Lower leg skin (tissue), 4 donors: ENCODE measurements at regions of chr10 and their contacts with region 1.

Region 1: DNA sequence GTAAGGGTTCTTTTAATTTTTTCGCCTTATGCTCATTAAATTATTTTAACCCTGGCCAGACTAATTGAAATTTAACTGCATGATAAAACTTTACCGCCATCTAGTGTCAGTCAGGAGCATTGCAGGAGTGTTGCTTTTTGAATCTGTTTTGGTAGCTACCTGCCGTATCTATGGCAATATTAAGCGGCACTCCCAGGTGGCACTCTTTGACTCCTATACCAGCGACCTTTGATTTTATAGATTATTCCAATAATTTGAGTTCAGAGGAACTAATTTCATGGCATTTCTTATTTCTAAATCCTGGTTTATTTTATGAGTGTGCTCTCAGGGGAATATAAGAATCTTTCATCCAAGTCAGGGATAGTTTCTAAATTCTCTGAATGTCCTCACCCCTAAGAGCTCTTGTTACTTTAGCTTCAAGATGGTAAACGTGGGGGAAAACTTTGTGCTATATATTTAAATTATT is 198.9 kb downstream of the REEP3 start:
- DNase-seq: no peak
- H3K4me3 ChIP-seq: no peak overlapping the region
- CTCF ChIP-seq: peak in 2 of 3 donors; percentile 24 to 77
- POLR2A ChIP-seq: no peak

Region 2: GRCh38 chr10:63166742-63167258 is 553.3 kb before region 1 on chr10:
- intact Hi-C with region 1: loop called (anchors 10 kb)
- DNase-seq: no peak
- H3K4me3 ChIP-seq: no peak overlapping the region
- CTCF ChIP-seq: peak in 2 of 3 donors; percentile 68 to 80
- POLR2A ChIP-seq: no peak

Region 3: GRCh38 chr10:63206997-63207811 is 512.9 kb before region 1 on chr10:
- intact Hi-C with region 1: loop called (anchors 10 kb)
- DNase-seq: peak in 1 of 2 donors; percentile 23
- H3K4me3 ChIP-seq: no peak overlapping the region
- CTCF ChIP-seq: no peak
- POLR2A ChIP-seq: no peak

Region 4: GRCh38 chr10:64859911-64860310 is 1139.8 kb after region 1 on chr10:
- intact Hi-C with region 1: no loop called
- DNase-seq: no peak
- H3K4me3 ChIP-seq: no peak overlapping the region
- CTCF ChIP-seq: no peak
- POLR2A ChIP-seq: no peak